GM12878 (cell line): ENCODE measurements at regions of chr2 and their contacts with region 1.

Region 1: GRCh38 chr2:68467077-68467960 is at the starts of genes APLF and FBXO48:
- DNase-seq: peak; percentile 95
- ATAC-seq: peak; percentile 96
- H3K4me3 ChIP-seq: peak within 1 kb of the TSS; percentile 80
- H3K27ac ChIP-seq: peak within 1 kb of the TSS; percentile 74
- H3K4me1 ChIP-seq: peaks cover 11% of the 10 kb centered on the region; the same call in 1 of the 2 replicates
- H3K27me3 ChIP-seq: no peaks in the 10 kb centered on the region
- CTCF ChIP-seq: no peak
- EP300 ChIP-seq: no peak
- POLR2A ChIP-seq: peak; percentile 77
- RAD21 ChIP-seq: no peak
- polyA plus RNA-seq, gene APLF: 0.66 to 0.69 TPM
- polyA plus RNA-seq, gene FBXO48: 0.90 to 1.1 TPM

Region 2: GRCh38 chr2:68121873-68122679 is 345.2 kb before region 1 on chr2:
- CTCF ChIA-PET with region 1: interaction called, 17 read pairs
- POLR2A ChIA-PET with region 1: no interaction called
- RAD21 ChIA-PET with region 1: interaction called, 4 read pairs
- SMC1A ChIA-PET with region 1: interaction called, 16 read pairs
- in situ Hi-C with region 1: no loop called
- intact Hi-C with region 1: no loop called
- DNase-seq: peak; percentile 50
- ATAC-seq: peak; percentile 23; the same call in 2 of the 3 replicates
- H3K4me3 ChIP-seq: peak overlapping the region; percentile 56; the same call in 1 of the 2 replicates
- H3K27ac ChIP-seq: peak overlapping the region; percentile 85
- H3K4me1 ChIP-seq: peaks cover 35% of the 10 kb centered on the region
- H3K27me3 ChIP-seq: no peaks in the 10 kb centered on the region
- CTCF ChIP-seq: peak; percentile 93 to 97 (median 96)
- EP300 ChIP-seq: no peak
- POLR2A ChIP-seq: no peak
- RAD21 ChIP-seq: peak; percentile 97

Region 3: GRCh38 chr2:68482296-68482820 is 15.0 kb after region 1 on chr2:
- CTCF ChIA-PET with region 1: interaction called, 45 read pairs
- POLR2A ChIA-PET with region 1: interaction called, 7 read pairs
- RAD21 ChIA-PET with region 1: interaction called, 17 read pairs
- SMC1A ChIA-PET with region 1: interaction called, 11 read pairs
- in situ Hi-C with region 1: no loop called
- intact Hi-C with region 1: no loop called
- DNase-seq: no peak
- ATAC-seq: no peak
- H3K4me3 ChIP-seq: no peak overlapping the region
- H3K27ac ChIP-seq: no peak overlapping the region
- H3K4me1 ChIP-seq: no peaks in the 10 kb centered on the region
- H3K27me3 ChIP-seq: no peaks in the 10 kb centered on the region
- CTCF ChIP-seq: no peak
- EP300 ChIP-seq: no peak
- POLR2A ChIP-seq: no peak
- RAD21 ChIP-seq: no peak

Region 4: GRCh38 chr2:68709421-68709911 is 242.1 kb after region 1 on chr2:
- CTCF ChIA-PET with region 1: interaction called, 173 read pairs
- POLR2A ChIA-PET with region 1: interaction called, 3 read pairs
- RAD21 ChIA-PET with region 1: interaction called, 17 read pairs
- SMC1A ChIA-PET with region 1: interaction called, 23 read pairs
- in situ Hi-C with region 1: loop called (anchors 5 kb)
- intact Hi-C with region 1: no loop called
- DNase-seq: no peak
- ATAC-seq: peak; percentile 78
- H3K4me3 ChIP-seq: no peak overlapping the region
- H3K27ac ChIP-seq: no peak overlapping the region
- H3K4me1 ChIP-seq: peaks cover 5% of the 10 kb centered on the region; the same call in 1 of the 2 replicates
- H3K27me3 ChIP-seq: no peaks in the 10 kb centered on the region; a peak in 2 of 4 replicates
- CTCF ChIP-seq: peak; percentile 61 to 66 (median 61)
- EP300 ChIP-seq: no peak
- POLR2A ChIP-seq: no peak
- RAD21 ChIP-seq: peak; percentile 63

Region 5: GRCh38 chr2:68837164-68837860 is 370.0 kb after region 1 on chr2:
- CTCF ChIA-PET with region 1: interaction called, 18 read pairs
- POLR2A ChIA-PET with region 1: no interaction called
- RAD21 ChIA-PET with region 1: interaction called, 6 read pairs
- SMC1A ChIA-PET with region 1: interaction called, 8 read pairs
- in situ Hi-C with region 1: no loop called
- intact Hi-C with region 1: loop called (anchors 2 kb)
- DNase-seq: peak; percentile 13
- ATAC-seq: peak; percentile 91
- H3K4me3 ChIP-seq: no peak overlapping the region
- H3K27ac ChIP-seq: no peak overlapping the region
- H3K4me1 ChIP-seq: peaks cover 27% of the 10 kb centered on the region
- H3K27me3 ChIP-seq: peaks cover 0 to 2% of the 10 kb centered on the region in 2 experiments; a peak in 1 of 4 replicates
- CTCF ChIP-seq: peak; percentile 67 to 85 (median 84)
- EP300 ChIP-seq: no peak
- POLR2A ChIP-seq: no peak
- RAD21 ChIP-seq: peak; percentile 55

Region 6: DNA sequence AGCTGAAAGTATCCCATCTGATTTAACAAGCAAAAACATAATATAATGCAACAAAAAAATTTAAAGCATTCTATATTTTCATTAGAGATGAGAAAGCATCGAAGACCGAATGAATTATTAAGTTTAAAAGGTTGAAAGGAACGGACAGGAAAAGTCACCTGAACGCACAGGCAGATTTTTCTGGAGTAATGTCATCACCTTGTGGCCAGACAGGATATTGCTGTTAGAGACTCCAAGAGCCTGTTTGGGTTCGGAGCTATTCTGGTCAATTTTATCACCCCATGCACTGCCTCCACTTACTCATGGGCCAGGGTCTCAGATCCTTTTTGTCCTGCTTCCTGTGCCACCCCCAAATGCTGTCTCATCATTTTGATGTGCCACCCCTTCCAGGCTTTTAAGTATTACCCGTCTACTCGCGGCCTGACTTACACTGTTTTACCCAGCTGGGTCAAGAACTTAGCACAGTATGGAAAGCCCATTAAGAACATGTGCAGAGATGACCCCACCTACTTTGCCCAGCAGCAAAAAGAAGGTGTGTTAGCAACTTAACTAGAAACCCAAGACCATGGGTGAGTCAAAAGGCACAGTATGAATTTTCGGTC is 458.1 kb after region 1 on chr2:
- CTCF ChIA-PET with region 1: interaction called, 23 read pairs
- POLR2A ChIA-PET with region 1: no interaction called
- RAD21 ChIA-PET with region 1: interaction called, 20 read pairs
- SMC1A ChIA-PET with region 1: interaction called, 16 read pairs
- in situ Hi-C with region 1: no loop called
- intact Hi-C with region 1: loop called (anchors 2 kb)
- DNase-seq: peak; percentile 12
- ATAC-seq: peak; percentile 83
- H3K4me3 ChIP-seq: no peak overlapping the region
- H3K27ac ChIP-seq: no peak overlapping the region
- H3K4me1 ChIP-seq: no peaks in the 10 kb centered on the region
- H3K27me3 ChIP-seq: peaks cover 0 to 2% of the 10 kb centered on the region in 2 experiments; a peak in 3 of 4 replicates
- CTCF ChIP-seq: peak; percentile 87 to 96 (median 91)
- EP300 ChIP-seq: no peak
- POLR2A ChIP-seq: no peak
- RAD21 ChIP-seq: peak; percentile 90